ENCODE measurements at regions of chr12 and their contacts with region 1.

Region 1: GRCh38 chr12:96578526-96579125 is 89.2 kb downstream of the CFAP54 start:
- DNase-seq: peak; percentile 31
- ATAC-seq: peak; percentile 85
- H3K4me3 Mint-ChIP-seq: no peak overlapping the region
- H3K27ac Mint-ChIP-seq: no peak overlapping the region
- H3K4me1 Mint-ChIP-seq: no peaks in the 10 kb centered on the region
- H3K27me3 Mint-ChIP-seq: peaks cover 12% of the 10 kb centered on the region

Region 2: GRCh38 chr12:96985480-96986362 is 407.1 kb after region 1 on chr12:
- CTCF ChIA-PET with region 1: interaction called, 11 read pairs
- POLR2A ChIA-PET with region 1: no interaction called
- DNase-seq: peak; percentile 42
- ATAC-seq: peak; percentile 95
- H3K4me3 Mint-ChIP-seq: peak overlapping the region; percentile 53
- H3K27ac Mint-ChIP-seq: no peak overlapping the region
- H3K4me1 Mint-ChIP-seq: peaks cover 3% of the 10 kb centered on the region
- H3K27me3 Mint-ChIP-seq: peaks cover 27% of the 10 kb centered on the region

Region 3: DNA sequence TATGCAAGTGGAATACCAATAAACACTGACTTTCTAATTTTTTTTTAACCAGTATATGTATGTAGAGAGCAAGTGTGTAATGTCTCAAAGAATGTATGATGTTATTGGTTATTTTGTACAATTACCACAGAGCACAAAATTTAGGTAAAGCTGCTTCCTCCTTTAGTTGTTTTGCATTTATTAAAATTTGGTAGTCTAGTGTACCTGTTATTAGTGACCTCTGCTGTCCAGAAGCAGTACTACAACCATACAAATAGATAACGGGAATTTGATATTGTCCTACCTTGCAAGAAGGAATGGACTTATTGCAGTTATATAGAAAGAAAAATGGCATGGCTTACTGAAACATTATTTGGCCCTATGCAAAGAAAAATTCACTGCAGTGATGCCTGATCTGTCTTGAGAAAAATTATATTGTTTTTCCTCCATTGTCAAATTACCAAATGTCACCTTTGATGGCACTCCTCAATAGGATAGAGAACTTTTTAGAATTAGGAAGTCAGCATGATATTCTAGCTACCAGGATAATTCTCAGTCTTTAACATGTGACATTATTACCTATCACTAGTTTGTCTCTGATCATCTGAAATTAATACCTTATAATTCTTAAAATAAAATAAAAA is 730.1 kb after region 1 on chr12:
- CTCF ChIA-PET with region 1: interaction called, 11 read pairs
- POLR2A ChIA-PET with region 1: no interaction called
- DNase-seq: peak; percentile 27
- ATAC-seq: no peak
- H3K4me3 Mint-ChIP-seq: no peak overlapping the region
- H3K27ac Mint-ChIP-seq: no peak overlapping the region
- H3K4me1 Mint-ChIP-seq: no peaks in the 10 kb centered on the region
- H3K27me3 Mint-ChIP-seq: peaks cover 5% of the 10 kb centered on the region